ENCODE measurements at regions of chr3 and their contacts with region 1.

Region 1: GRCh38 chr3:37504583-37505357 is 330.4 kb upstream of the LRRFIP2 start:
- DNase-seq: no peak
- ATAC-seq: no peak
- H3K4me3 ChIP-seq: no peak overlapping the region
- H3K27ac ChIP-seq: peak overlapping the region in 2 of 12 donors; percentile 36 to 87
- H3K4me1 ChIP-seq: peaks cover 0 to 52% (median 29%) of the 10 kb centered on the region in 12 donors
- H3K27me3 ChIP-seq: no peaks in the 10 kb centered on the region
- CTCF ChIP-seq: no peak
- POLR2A ChIP-seq: no peak

Region 2: GRCh38 chr3:37014620-37015019 is 490.1 kb before region 1 on chr3:
- intact Hi-C with region 1: loop called in 1 of 10 experiments (anchors 10 kb)
- DNase-seq: peak in 4 of 5 donors; percentile 71 to 90 (median 83)
- ATAC-seq: peak; percentile 68 to 81 (median 80)
- H3K4me3 ChIP-seq: no peak overlapping the region
- H3K27ac ChIP-seq: peak overlapping the region; percentile 11 to 93 (median 76)
- H3K4me1 ChIP-seq: peaks cover 0 to 40% (median 8%) of the 10 kb centered on the region in 12 donors
- H3K27me3 ChIP-seq: no peaks in the 10 kb centered on the region
- CTCF ChIP-seq: no peak
- POLR2A ChIP-seq: no peak

Region 3: GRCh38 chr3:37349640-37350039 is 155.1 kb before region 1 on chr3:
- intact Hi-C with region 1: no loop called
- DNase-seq: no peak
- ATAC-seq: no peak
- H3K4me3 ChIP-seq: no peak overlapping the region
- H3K27ac ChIP-seq: no peak overlapping the region
- H3K4me1 ChIP-seq: peaks cover 0 to 5% (median 0%) of the 10 kb centered on the region in 12 donors
- H3K27me3 ChIP-seq: no peaks in the 10 kb centered on the region
- CTCF ChIP-seq: no peak
- POLR2A ChIP-seq: no peak

Region 4: DNA sequence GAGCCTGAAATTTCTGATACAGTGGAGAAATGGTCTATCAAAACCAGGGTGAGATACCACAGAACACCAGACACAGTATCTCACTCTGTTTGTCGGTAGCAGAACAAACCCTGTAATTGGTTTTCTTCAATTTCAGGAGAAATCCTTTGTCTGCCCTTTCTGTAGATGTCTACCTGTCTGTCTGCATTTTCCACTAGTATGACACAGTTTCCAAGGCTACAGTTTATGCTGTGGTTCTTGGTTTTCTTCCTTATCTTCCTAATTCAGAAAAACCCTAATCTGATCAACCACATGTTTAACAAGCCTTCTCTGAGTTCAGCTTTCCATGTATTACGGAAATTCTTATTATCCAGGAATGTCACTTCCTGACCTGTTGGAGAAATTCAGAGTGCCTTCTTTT is 1476.2 kb after region 1 on chr3:
- intact Hi-C with region 1: no loop called
- DNase-seq: no peak
- ATAC-seq: no peak
- H3K4me3 ChIP-seq: no peak overlapping the region
- H3K27ac ChIP-seq: no peak overlapping the region
- H3K4me1 ChIP-seq: no peaks in the 10 kb centered on the region
- H3K27me3 ChIP-seq: peaks cover 0 to 5% (median 0%) of the 10 kb centered on the region in 9 donors
- CTCF ChIP-seq: no peak
- POLR2A ChIP-seq: no peak

Measured in heart left ventricle (tissue), 16 donors.